Psoas muscle (tissue), 8 donors: ENCODE measurements at regions of chr13 and their contacts with region 1.

Region 1: GRCh38 chr13:111204438-111205177 is 89.5 kb downstream of the ARHGEF7 start:
- DNase-seq: peak; percentile 60 to 75
- ATAC-seq: peak; percentile 42 to 60 (median 48)
- H3K4me3 ChIP-seq: peak overlapping the region; percentile 56
- H3K27ac ChIP-seq: peak overlapping the region; percentile 57
- H3K4me1 ChIP-seq: peaks cover 74% of the 10 kb centered on the region
- H3K27me3 ChIP-seq: no peaks in the 10 kb centered on the region
- CTCF ChIP-seq: no peak

Region 2: GRCh38 chr13:111122056-111122455 is 82.6 kb before region 1 on chr13:
- intact Hi-C with region 1: loop called in 1 of 2 experiments (anchors 5 kb)
- DNase-seq: peak; percentile 65 to 83
- ATAC-seq: peak; percentile 97 to 98 (median 97)
- H3K4me3 ChIP-seq: peak overlapping the region; percentile 43
- H3K27ac ChIP-seq: peak overlapping the region; percentile 91
- H3K4me1 ChIP-seq: peaks cover 28% of the 10 kb centered on the region
- H3K27me3 ChIP-seq: no peaks in the 10 kb centered on the region
- CTCF ChIP-seq: peak; percentile 27